Activated B cell treated with CpG ODN at 0.5 μM for 24 hours (primary cell): ENCODE measurements at regions of chr15 and their contacts with region 1.

Region 1: GRCh38 chr15:34266751-34267150 is 41.9 kb downstream of the EMC4 start:
- DNase-seq: no peak
- ATAC-seq: no peak
- H3K4me3 Mint-ChIP-seq: no peak overlapping the region
- H3K27ac Mint-ChIP-seq: no peak overlapping the region
- H3K4me1 Mint-ChIP-seq: no peaks in the 10 kb centered on the region
- H3K27me3 Mint-ChIP-seq: no peaks in the 10 kb centered on the region
- CTCF ChIP-seq: no peak

Region 2: GRCh38 chr15:34122771-34123183 is 144.0 kb before region 1 on chr15:
- CTCF ChIA-PET with region 1: no interaction called
- POLR2A ChIA-PET with region 1: no interaction called
- intact Hi-C with region 1: no loop called
- DNase-seq: no peak
- ATAC-seq: no peak
- H3K4me3 Mint-ChIP-seq: no peak overlapping the region
- H3K27ac Mint-ChIP-seq: no peak overlapping the region
- H3K4me1 Mint-ChIP-seq: no peaks in the 10 kb centered on the region
- H3K27me3 Mint-ChIP-seq: peaks cover 16% of the 10 kb centered on the region
- CTCF ChIP-seq: no peak

Region 3: DNA sequence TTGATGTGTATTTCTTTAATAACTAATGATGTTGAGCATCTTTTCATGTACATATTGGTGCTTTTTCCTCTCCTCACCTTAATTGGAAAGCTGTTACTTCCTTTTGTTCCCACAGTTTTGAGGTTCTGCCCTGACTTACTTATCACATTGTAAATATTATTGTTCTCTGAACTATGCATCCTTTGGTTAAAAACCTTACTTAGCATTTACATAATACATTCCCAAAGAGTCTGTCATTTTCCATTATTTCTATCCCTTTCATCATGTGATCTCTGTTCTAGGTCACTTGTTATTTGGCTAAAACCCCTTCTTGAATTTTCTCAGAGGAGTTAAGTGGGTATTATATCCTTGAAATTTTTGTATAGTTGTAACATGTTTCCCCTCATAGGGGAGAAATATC is 37.9 kb after region 1 on chr15:
- CTCF ChIA-PET with region 1: no interaction called
- POLR2A ChIA-PET with region 1: no interaction called
- intact Hi-C with region 1: loop called (anchors 5 kb)
- DNase-seq: no peak
- ATAC-seq: no peak
- H3K4me3 Mint-ChIP-seq: no peak overlapping the region
- H3K27ac Mint-ChIP-seq: peak overlapping the region; percentile 42
- H3K4me1 Mint-ChIP-seq: peaks cover 50% of the 10 kb centered on the region
- H3K27me3 Mint-ChIP-seq: no peaks in the 10 kb centered on the region
- CTCF ChIP-seq: no peak